ENCODE measurements at regions of chr16 and their contacts with region 1.

Region 1: GRCh38 chr16:23423496-23424049 is 29.4 kb downstream of the COG7 start:
- DNase-seq: no peak
- ATAC-seq: no peak
- H3K4me3 ChIP-seq: no peak overlapping the region
- H3K27ac ChIP-seq: no peak overlapping the region
- H3K4me1 ChIP-seq: no peaks in the 10 kb centered on the region
- H3K27me3 ChIP-seq: no peaks in the 10 kb centered on the region
- CTCF ChIP-seq: no peak
- EP300 ChIP-seq: no peak
- POLR2A ChIP-seq: no peak
- RAD21 ChIP-seq: no peak

Region 2: DNA sequence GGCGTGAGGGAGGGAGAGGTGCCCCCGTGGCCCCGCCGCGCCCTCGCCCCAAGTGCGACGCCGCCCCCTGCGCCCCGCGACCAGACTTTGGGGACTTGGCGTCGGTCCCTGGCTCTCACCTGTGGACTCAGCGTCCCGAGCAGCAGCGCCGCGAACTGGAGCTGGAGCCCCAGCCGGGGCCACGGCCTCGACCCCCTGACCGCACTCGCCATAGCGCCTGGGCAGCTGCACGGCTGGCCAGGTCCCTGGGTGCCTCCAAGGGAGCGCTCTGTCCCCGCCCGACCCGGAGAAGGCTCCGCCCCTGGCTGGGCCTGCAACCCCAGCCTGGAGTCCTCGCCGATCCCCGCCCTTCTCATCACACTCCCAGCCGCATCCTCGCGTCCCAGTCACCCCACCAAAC is 289.4 kb after region 1 on chr16 and contains the start of gene ERN2:
- CTCF ChIA-PET with region 1: no interaction called
- POLR2A ChIA-PET with region 1: interaction called, 11 read pairs
- RAD21 ChIA-PET with region 1: no interaction called
- SMC1A ChIA-PET with region 1: no interaction called
- in situ Hi-C with region 1: no loop called
- intact Hi-C with region 1: no loop called
- DNase-seq: no peak
- ATAC-seq: no peak
- H3K4me3 ChIP-seq: no peak within 1 kb of the TSS
- H3K27ac ChIP-seq: no peak within 1 kb of the TSS
- H3K4me1 ChIP-seq: no peaks in the 10 kb centered on the region
- H3K27me3 ChIP-seq: peaks cover 0 to 2% of the 10 kb centered on the region in 2 experiments; a peak in 1 of 4 replicates
- CTCF ChIP-seq: no peak
- EP300 ChIP-seq: no peak
- POLR2A ChIP-seq: no peak
- RAD21 ChIP-seq: no peak
- polyA plus RNA-seq, gene ERN2: not detected

Measured in GM12878 (cell line).